Activated CD8-positive, alpha-beta T cell treated with anti-CD3 and anti-CD28 coated beads for 36 hours (primary cell): ENCODE measurements at regions of chr6 and their contacts with region 1.

Region 1: GRCh38 chr6:111823831-111824607 is 49.2 kb downstream of the FYN start:
- DNase-seq: peak; percentile 61
- ATAC-seq: peak; percentile 78
- H3K4me3 Mint-ChIP-seq: peak overlapping the region; percentile 39
- H3K27ac Mint-ChIP-seq: peak overlapping the region; percentile 97
- H3K4me1 Mint-ChIP-seq: peaks cover 83% of the 10 kb centered on the region
- H3K27me3 Mint-ChIP-seq: no peaks in the 10 kb centered on the region
- CTCF ChIP-seq: no peak

Region 2: DNA sequence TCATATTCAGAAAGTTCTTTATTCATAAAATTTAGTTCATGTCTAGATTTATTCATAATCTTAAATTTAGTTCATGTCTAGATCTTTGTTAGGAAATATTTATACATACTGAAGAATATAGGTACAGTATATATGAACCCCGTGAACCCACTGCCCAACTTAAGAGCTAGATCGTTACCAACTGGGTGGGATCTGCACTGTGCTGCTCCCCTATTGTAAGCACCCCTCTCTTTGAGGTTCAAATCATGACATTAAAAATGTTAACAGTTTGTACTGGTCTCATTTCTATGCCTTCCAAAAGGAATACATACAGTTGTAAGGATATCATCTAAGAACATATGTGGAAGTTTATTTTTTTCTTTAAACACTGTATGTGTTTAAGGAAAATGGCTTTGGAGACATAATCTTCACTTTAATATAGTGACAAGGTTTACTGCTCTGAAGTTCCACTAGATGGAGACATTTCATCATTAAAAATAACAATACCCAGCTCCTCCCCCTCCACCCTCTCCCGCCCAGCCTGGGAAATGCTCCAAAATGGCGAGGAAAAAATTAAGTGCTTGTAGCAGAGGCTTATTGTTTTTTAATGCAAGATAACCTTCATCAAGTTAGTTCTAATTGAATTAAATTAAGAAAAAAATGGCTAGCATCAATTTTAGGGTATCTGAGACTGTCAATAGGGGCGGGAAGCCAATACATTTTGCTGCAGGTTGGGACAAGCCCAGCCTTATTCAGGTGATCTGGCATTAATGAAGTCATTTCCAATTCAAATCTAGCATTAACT is 114.2 kb before region 1 on chr6:
- CTCF ChIA-PET with region 1: interaction called, 15 read pairs
- POLR2A ChIA-PET with region 1: interaction called, 3 read pairs
- intact Hi-C with region 1: no loop called
- DNase-seq: peak; percentile 67
- ATAC-seq: peak; percentile 79
- H3K4me3 Mint-ChIP-seq: no peak overlapping the region
- H3K27ac Mint-ChIP-seq: peak overlapping the region; percentile 92
- H3K4me1 Mint-ChIP-seq: peaks cover 63% of the 10 kb centered on the region
- H3K27me3 Mint-ChIP-seq: no peaks in the 10 kb centered on the region
- CTCF ChIP-seq: peak; percentile 73

Region 3: DNA sequence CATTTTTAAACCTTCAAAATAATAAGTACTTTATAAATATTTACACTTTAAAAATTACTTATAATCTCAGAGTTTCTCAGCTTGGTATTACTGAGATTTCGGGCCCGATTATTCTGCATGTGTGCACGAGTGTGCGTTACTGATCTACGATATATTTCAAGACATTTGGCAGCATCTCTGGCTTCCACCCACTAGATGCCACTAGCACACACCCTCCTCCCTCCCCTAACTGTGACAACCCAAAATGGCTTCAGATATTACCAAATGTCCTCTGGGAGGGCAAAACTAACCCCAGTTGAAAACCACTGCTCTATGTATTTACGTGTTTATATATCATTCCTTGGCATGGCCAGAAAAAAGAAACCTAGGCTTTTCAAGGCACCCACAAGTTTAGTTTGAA is 46.7 kb before region 1 on chr6:
- CTCF ChIA-PET with region 1: interaction called, 11 read pairs
- POLR2A ChIA-PET with region 1: interaction called, 4 read pairs
- intact Hi-C with region 1: no loop called
- DNase-seq: no peak
- ATAC-seq: peak; percentile 47
- H3K4me3 Mint-ChIP-seq: no peak overlapping the region
- H3K27ac Mint-ChIP-seq: peak overlapping the region; percentile 82
- H3K4me1 Mint-ChIP-seq: peaks cover 90% of the 10 kb centered on the region
- H3K27me3 Mint-ChIP-seq: no peaks in the 10 kb centered on the region
- CTCF ChIP-seq: no peak

Region 4: GRCh38 chr6:111812060-111813038 is 11.7 kb before region 1 on chr6:
- CTCF ChIA-PET with region 1: interaction called, 11 read pairs
- POLR2A ChIA-PET with region 1: interaction called, 21 read pairs
- intact Hi-C with region 1: no loop called
- DNase-seq: no peak
- ATAC-seq: peak; percentile 37
- H3K4me3 Mint-ChIP-seq: peak overlapping the region; percentile 65
- H3K27ac Mint-ChIP-seq: peak overlapping the region; percentile 96
- H3K4me1 Mint-ChIP-seq: peaks cover 85% of the 10 kb centered on the region
- H3K27me3 Mint-ChIP-seq: no peaks in the 10 kb centered on the region
- CTCF ChIP-seq: no peak

Region 5: GRCh38 chr6:111845441-111845871 is 21.4 kb after region 1 on chr6:
- CTCF ChIA-PET with region 1: interaction called, 13 read pairs
- POLR2A ChIA-PET with region 1: interaction called, 26 read pairs
- intact Hi-C with region 1: no loop called
- DNase-seq: peak; percentile 56
- ATAC-seq: peak; percentile 10
- H3K4me3 Mint-ChIP-seq: no peak overlapping the region
- H3K27ac Mint-ChIP-seq: no peak overlapping the region
- H3K4me1 Mint-ChIP-seq: peaks cover 17% of the 10 kb centered on the region
- H3K27me3 Mint-ChIP-seq: no peaks in the 10 kb centered on the region
- CTCF ChIP-seq: no peak

Region 6: DNA sequence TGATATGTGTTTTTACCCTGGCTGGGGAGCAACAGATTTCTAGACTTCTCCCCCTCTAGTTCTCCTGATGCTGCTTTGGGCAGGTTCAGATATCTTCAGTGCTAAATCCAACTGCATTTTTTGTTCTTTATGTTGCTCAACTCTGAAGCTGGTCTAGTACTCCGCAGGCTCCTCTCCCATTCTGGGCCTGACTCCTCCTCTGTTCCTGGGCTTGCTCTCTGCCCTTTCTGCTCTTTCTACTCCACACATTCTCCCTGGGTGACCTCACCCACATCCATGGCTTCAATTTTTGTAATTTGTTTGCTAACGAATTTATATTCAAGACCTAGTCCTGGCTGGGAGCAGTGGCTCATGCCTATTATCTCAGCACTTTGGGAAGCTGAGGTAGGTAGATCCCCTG is 42.8 kb after region 1 on chr6:
- CTCF ChIA-PET with region 1: interaction called, 5 read pairs
- POLR2A ChIA-PET with region 1: interaction called, 19 read pairs
- intact Hi-C with region 1: no loop called
- DNase-seq: no peak
- ATAC-seq: no peak
- H3K4me3 Mint-ChIP-seq: peak overlapping the region; percentile 98
- H3K27ac Mint-ChIP-seq: peak overlapping the region; percentile 91
- H3K4me1 Mint-ChIP-seq: peaks cover 85% of the 10 kb centered on the region
- H3K27me3 Mint-ChIP-seq: no peaks in the 10 kb centered on the region
- CTCF ChIP-seq: no peak

Region 7: DNA sequence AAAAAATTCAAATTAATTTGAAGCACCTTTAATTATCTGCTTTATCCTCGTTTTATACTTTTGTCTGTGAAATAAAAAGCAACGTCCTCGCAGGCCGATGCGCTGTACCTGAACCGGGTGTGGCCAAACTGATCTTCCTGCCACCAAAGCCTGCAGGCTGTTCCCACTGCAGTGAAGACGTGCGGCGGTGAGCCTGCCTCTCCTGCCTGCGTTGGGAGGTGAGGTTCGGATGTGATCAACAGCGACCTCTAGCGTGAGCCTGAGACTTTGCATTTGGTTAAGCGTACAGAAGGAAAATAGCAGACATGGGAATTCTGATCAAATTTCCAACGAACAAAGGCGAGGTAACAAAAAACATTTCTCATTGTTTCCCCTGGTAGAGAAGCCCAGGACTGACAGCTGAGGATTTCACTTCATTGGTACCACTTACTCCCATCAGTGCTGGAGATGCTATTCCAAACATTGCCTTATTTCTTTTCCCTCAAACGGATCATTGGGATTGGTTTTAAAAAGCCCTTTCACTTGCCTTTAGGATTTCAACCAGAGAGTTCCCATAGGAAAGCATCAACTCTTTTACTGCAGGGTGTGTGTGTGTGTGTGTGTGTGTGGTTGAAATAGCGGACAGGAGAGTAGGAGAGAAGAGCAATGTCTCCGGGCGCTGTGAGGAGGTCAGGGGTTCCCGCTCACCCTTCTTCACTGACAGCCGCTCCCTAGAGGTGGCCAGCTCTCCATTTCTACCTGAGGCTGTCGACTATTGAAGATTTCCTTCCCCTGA is 173.2 kb after region 1 on chr6:
- CTCF ChIA-PET with region 1: interaction called, 3 read pairs
- POLR2A ChIA-PET with region 1: interaction called, 11 read pairs
- intact Hi-C with region 1: no loop called
- DNase-seq: peak; percentile 84
- ATAC-seq: peak; percentile 65
- H3K4me3 Mint-ChIP-seq: peak overlapping the region; percentile 55
- H3K27ac Mint-ChIP-seq: peak overlapping the region; percentile 79
- H3K4me1 Mint-ChIP-seq: peaks cover 47% of the 10 kb centered on the region
- H3K27me3 Mint-ChIP-seq: no peaks in the 10 kb centered on the region
- CTCF ChIP-seq: peak; percentile 99